SK-N-SH (cell line): ENCODE measurements at regions of chr16 and their contacts with region 1.

Region 1: DNA sequence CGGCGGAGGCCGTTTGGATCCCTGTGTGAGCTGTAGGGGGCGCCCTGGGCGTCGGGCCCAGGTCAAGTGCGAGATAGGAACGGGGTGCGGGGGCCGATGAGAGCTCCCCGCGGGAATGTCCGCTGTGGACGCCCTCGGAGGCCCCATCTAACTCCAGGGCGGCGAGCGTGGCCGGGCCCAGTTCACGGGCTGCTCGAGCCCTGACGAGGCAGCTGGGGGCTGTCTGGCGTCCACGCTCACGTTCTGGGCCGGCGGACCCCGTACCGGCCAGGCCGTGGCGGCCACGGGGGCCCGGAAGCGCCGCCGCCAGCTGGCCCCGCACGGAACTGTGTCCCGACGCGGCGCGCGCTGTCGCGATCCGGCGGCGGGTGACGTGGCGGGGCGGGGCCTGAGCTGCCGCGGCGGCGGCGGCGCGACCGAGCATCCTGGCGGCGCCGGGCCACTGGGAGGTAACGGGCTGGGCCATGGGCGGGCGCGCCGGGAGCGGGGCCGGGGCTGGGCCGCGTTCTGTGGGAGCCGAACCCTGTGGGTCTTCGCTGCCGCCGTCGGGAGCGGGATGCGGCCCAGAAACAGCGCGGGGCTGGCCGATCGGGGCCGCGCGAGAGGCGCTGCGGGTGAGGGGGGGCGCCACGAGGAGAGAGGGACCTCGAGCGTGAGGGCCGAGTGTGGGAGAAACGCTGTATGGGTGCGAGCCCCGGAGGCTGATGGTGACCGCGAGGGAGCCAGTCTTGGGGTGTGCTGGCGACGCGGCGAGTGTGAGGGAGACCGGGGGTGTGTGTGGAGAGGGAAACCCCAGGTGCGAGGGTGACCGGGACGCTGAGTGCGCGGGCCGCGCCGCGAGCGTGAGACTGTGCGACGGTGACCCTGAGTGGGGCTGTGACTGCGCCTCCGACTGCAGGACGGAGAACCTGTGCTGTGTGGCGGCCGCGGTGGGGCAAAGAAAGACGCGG is at the start of gene SLC7A6:
- DNase-seq: peak; percentile 93
- H3K4me3 ChIP-seq: peak within 1 kb of the TSS; percentile 65 to 80
- H3K27ac ChIP-seq: peak within 1 kb of the TSS; percentile 87 to 89
- H3K4me1 ChIP-seq: peaks cover 0 to 4% of the 10 kb centered on the region in 2 experiments; a peak in 2 of 4 replicates
- H3K27me3 ChIP-seq: no peaks in the 10 kb centered on the region
- CTCF ChIP-seq: peak; percentile 77
- EP300 ChIP-seq: peak in 1 of 2 experiments; percentile 23; a peak in 1 of 4 replicates
- RAD21 ChIP-seq: no peak; the same call in 1 of the 2 replicates
- polyA plus RNA-seq, gene SLC7A6: 19.0 and 37.3 TPM in 2 replicates

Region 2: GRCh38 chr16:68000450-68000849 is 264.0 kb before region 1 on chr16:
- CTCF ChIA-PET with region 1: no interaction called
- POLR2A ChIA-PET with region 1: no interaction called
- DNase-seq: no peak
- H3K4me3 ChIP-seq: no peak overlapping the region
- H3K27ac ChIP-seq: no peak overlapping the region
- H3K4me1 ChIP-seq: no peaks in the 10 kb centered on the region
- H3K27me3 ChIP-seq: no peaks in the 10 kb centered on the region
- CTCF ChIP-seq: no peak
- EP300 ChIP-seq: no peak
- RAD21 ChIP-seq: no peak

Region 3: GRCh38 chr16:68197250-68197649 is 67.2 kb before region 1 on chr16:
- CTCF ChIA-PET with region 1: no interaction called
- POLR2A ChIA-PET with region 1: no interaction called
- DNase-seq: no peak
- H3K4me3 ChIP-seq: no peak overlapping the region
- H3K27ac ChIP-seq: no peak overlapping the region
- H3K4me1 ChIP-seq: peaks cover 0 to 6% of the 10 kb centered on the region in 2 experiments; a peak in 3 of 4 replicates
- H3K27me3 ChIP-seq: no peaks in the 10 kb centered on the region
- CTCF ChIP-seq: no peak
- EP300 ChIP-seq: no peak
- RAD21 ChIP-seq: no peak

Region 4: DNA sequence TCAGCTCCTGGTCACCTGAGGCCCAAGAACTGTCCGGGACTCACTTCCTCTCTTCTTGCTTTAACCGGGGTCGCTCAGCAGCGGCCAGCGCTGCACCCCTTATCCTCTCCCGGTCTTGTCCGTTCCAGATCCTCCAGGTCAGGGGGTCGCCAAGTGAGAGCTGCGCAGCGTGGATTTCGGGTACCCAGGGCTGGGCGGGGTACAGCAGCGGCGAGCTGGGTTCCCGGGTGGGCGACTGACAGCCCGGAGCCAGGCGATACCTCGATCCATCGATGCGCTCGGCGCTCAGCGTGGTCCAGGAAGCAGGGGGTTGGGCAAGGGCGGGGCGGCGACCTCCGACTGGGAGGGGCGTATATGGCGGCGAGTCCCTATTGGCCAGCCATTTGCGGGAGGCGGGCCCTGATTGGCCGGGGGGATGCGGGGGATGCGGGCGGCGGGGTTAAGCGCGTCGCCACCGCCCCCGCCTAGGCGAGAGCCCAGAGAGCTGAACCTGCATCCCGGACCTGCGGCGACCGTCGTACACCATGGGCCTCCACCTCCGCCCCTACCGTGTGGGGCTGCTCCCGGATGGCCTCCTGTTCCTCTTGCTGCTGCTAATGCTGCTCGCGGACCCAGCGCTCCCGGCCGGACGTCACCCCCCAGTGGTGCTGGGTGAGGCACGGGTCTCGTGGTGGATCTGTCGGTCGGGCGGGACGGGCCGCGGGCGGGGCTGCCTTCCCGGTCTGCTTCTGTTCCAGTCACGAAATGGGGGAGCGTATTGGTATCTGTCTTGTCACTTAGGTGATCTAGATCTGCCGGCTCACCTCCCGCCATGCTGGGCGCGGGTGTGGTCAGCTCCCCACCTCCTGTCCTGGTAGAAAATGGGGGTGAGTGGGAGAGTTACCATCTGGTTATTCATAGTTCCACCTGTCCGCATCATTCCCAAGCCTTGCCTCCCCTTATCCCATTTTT is 19.2 kb before region 1 on chr16 and contains the start of gene PLA2G15:
- CTCF ChIA-PET with region 1: interaction called, 92 read pairs
- POLR2A ChIA-PET with region 1: interaction called, 3 read pairs
- DNase-seq: peak; percentile 100
- H3K4me3 ChIP-seq: peak within 1 kb of the TSS; percentile 88 to 92
- H3K27ac ChIP-seq: peak within 1 kb of the TSS in 1 of 2 experiments; percentile 24; a peak in 1 of 4 replicates
- H3K4me1 ChIP-seq: peaks cover 7 to 15% of the 10 kb centered on the region in 2 experiments; a peak in 2 of 4 replicates
- H3K27me3 ChIP-seq: no peaks in the 10 kb centered on the region
- CTCF ChIP-seq: no peak
- EP300 ChIP-seq: no peak
- RAD21 ChIP-seq: no peak
- polyA plus RNA-seq, gene PLA2G15: 22.0 and 23.9 TPM in 2 replicates

Region 5: DNA sequence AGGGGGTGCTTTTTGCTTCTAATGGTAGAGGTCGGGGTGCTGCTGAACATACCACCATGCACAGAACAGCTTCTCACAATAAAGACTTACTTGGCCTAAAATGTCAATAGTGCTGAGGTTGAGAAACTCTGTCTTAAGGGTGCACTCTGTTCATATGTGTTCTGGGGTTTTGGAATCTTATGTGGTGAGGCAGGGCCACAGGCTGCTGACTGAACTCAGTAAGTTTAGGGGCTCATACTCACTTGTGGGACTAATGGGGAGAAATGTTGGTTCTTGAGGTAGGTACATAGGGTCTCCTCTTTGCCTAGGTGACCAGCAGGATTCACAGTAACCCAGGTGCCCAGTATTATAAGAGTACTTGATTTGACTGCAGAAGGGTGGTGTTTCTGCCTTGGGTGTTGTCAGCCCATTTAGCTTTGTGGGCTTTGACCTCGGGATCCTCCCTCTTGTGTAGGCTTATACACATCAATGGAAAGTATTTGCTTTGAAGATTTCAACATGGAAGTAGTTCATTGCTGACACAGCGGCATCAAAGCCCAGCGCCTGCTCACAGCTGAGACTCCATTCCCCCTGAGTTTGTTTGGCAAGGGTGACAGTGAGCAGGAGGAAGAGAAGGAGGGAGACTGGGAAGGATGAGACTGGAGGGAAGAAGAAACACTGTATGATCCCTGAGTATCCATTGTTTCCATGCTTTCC is 17.1 kb after region 1 on chr16:
- CTCF ChIA-PET with region 1: interaction called, 80 read pairs
- POLR2A ChIA-PET with region 1: interaction called, 3 read pairs
- DNase-seq: no peak
- H3K4me3 ChIP-seq: no peak overlapping the region
- H3K27ac ChIP-seq: no peak overlapping the region
- H3K4me1 ChIP-seq: no peaks in the 10 kb centered on the region
- H3K27me3 ChIP-seq: no peaks in the 10 kb centered on the region
- CTCF ChIP-seq: no peak
- EP300 ChIP-seq: no peak
- RAD21 ChIP-seq: no peak

Region 6: GRCh38 chr16:68296693-68297092 is 32.3 kb after region 1 on chr16:
- CTCF ChIA-PET with region 1: interaction called, 80 read pairs
- POLR2A ChIA-PET with region 1: interaction called, 3 read pairs
- DNase-seq: no peak
- H3K4me3 ChIP-seq: no peak overlapping the region
- H3K27ac ChIP-seq: no peak overlapping the region
- H3K4me1 ChIP-seq: peaks cover 3 to 15% of the 10 kb centered on the region in 2 experiments; a peak in 3 of 4 replicates
- H3K27me3 ChIP-seq: no peaks in the 10 kb centered on the region
- CTCF ChIP-seq: no peak
- EP300 ChIP-seq: no peak
- RAD21 ChIP-seq: no peak

Region 7: GRCh38 chr16:68328151-68328859 is 63.9 kb after region 1 on chr16:
- CTCF ChIA-PET with region 1: interaction called, 355 read pairs
- POLR2A ChIA-PET with region 1: interaction called, 3 read pairs
- DNase-seq: peak; percentile 86
- H3K4me3 ChIP-seq: no peak overlapping the region; a peak in 1 of 4 replicates
- H3K27ac ChIP-seq: no peak overlapping the region
- H3K4me1 ChIP-seq: peaks cover 0 to 17% of the 10 kb centered on the region in 2 experiments; a peak in 1 of 4 replicates
- H3K27me3 ChIP-seq: no peaks in the 10 kb centered on the region
- CTCF ChIP-seq: peak; percentile 85
- EP300 ChIP-seq: no peak
- RAD21 ChIP-seq: peak; percentile 91

Region 8: DNA sequence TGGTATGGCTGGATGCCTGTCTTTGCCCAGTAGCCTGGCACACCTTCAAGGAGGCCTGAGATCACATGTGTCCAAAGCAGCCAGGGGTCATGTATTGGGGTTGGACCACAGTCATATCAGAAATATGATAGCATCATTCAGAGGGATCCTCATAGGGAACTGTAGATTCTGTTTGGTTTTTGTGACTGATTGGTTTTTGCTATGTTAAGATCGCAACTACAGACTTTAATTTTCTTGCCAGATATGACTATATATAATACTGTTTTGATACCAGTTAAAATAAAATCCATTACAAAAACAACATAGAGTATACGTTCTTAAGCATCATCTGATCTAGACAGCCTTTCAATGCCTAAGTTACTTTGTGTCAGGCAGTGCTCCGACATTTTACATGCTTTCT is 195.7 kb after region 1 on chr16:
- CTCF ChIA-PET with region 1: no interaction called
- POLR2A ChIA-PET with region 1: no interaction called
- DNase-seq: no peak
- H3K4me3 ChIP-seq: no peak overlapping the region
- H3K27ac ChIP-seq: no peak overlapping the region
- H3K4me1 ChIP-seq: no peaks in the 10 kb centered on the region; a peak in 1 of 4 replicates
- H3K27me3 ChIP-seq: no peaks in the 10 kb centered on the region
- CTCF ChIP-seq: no peak
- EP300 ChIP-seq: no peak
- RAD21 ChIP-seq: no peak